Activated T-helper 1 cell treated with anti-CD3 and anti-CD28 coated beads, Interleukin-12 subunit alpha, Interleukin-12 subunit beta, Interleukin-2, Interleukin-4 antibody, amounts not matched to agents 30 ng/mL and 10 ng/mL and 1 ng/mL, durations not matched to agents 14 hours and 24 hours and 36 hours (primary cell): ENCODE measurements at regions of chr1 and their contacts with region 1.

Region 1: DNA sequence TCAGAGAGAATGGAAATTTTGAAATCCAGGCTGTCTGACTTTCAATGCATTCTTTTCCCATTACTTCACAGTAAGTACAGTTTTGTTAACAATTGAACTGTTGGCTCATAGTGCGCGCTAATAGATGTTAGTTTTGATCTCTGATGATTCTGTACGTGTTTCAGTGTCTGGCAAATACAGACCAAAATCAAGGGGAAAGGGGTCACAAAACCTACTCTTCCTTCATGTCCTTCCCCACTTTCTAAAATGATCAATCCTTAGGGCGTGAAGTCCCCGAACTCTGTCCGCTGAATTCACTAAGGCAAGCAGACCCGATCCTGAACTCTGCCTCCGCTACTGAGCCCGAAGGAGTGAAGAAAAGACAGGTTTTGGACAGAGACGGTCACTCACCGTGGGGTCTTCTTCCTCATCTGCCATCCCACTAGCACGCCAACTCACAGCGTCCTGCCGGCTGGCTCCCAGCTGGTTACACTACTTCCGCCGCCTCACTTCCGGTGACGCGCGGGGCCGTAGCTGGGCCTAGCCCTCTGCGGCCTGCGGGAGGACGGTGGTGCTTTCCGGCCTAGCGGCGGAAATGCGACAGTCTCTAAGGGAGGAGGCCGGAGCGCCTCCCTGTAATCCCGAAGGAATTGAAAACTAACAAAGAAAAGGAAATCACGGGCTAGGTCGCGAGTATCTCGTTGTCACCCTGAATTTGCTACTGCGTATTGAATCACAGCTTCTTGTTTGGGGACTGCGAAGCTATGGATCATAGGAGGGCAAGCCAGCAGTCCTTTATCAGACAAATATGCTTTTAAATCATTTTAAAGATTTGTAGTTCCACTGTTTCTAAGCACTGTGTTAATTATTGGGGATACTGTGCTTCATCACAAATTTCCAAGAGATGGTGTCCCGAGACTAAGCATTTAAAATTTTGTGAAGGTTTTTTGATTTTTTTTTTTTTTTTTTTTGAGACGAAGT is at the start of gene TAF13:
- DNase-seq: peak; percentile 87
- H3K4me3 Mint-ChIP-seq: peak within 1 kb of the TSS; percentile 99
- H3K27ac Mint-ChIP-seq: peak within 1 kb of the TSS; percentile 88
- H3K4me1 Mint-ChIP-seq: peaks cover 20% of the 10 kb centered on the region
- H3K27me3 Mint-ChIP-seq: peaks cover 1% of the 10 kb centered on the region
- total RNA-seq, gene TAF13: 28.8 and 32.6 TPM in 2 replicates

Region 2: GRCh38 chr1:109099938-109100773 is 24.3 kb after region 1 on chr1:
- intact Hi-C with region 1: loop called (anchors 1 kb)
- DNase-seq: peak; percentile 95
- H3K4me3 Mint-ChIP-seq: peak overlapping the region; percentile 97
- H3K27ac Mint-ChIP-seq: peak overlapping the region; percentile 98
- H3K4me1 Mint-ChIP-seq: peaks cover 10% of the 10 kb centered on the region
- H3K27me3 Mint-ChIP-seq: no peaks in the 10 kb centered on the region